CD4-positive, alpha-beta T cell (primary cell): ENCODE measurements at regions of chr1 and their contacts with region 1.

Region 1: DNA sequence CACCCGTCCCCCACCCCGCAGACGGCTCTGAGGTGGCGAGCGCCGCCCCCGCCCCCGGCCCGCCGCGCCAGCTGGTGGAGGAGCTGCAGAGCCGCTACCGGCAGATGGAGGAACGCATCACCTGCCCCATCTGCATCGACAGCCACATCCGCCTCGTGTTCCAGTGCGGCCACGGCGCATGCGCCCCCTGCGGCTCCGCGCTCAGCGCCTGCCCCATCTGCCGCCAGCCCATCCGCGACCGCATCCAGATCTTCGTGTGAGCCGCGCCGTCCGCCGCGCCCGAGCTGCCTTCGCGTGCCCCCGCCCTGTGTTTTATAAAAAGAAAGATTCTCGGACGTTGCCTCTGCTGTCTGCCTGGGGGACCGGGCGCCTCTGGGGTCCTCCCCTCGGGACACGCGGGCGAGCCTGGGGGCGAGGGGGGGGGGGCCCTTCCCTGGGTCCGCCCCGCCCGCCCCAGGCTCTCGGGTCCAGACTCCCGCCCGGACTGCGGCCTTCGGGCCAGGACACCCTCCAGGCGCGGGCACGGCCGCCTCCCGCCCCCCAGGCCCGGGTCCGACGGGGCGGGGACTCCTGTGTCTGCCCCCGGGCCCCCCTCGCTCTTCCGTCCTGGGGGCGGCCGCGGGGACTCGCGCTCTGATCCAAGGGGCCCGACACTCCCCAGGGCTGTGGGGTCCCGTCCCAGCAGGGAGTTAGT is 1.6 kb upstream of the MMP23B start:
- DNase-seq: peak; percentile 87 to 99 (median 94)
- ATAC-seq: peak; percentile 71
- H3K4me3 ChIP-seq: peak overlapping the region; percentile 20
- H3K4me3 Mint-ChIP-seq: peak overlapping the region; percentile 96
- H3K27ac ChIP-seq: peak overlapping the region in 1 of 2 donors; percentile 46
- H3K27ac Mint-ChIP-seq: peak overlapping the region; percentile 96
- H3K4me1 ChIP-seq: peaks cover 36% of the 10 kb centered on the region
- H3K4me1 Mint-ChIP-seq: peaks cover 9% of the 10 kb centered on the region
- H3K27me3 ChIP-seq: peaks cover 0 to 2% of the 10 kb centered on the region in 2 experiments
- H3K27me3 Mint-ChIP-seq: peaks cover 5% of the 10 kb centered on the region
- CTCF ChIP-seq: no peak

Region 2: DNA sequence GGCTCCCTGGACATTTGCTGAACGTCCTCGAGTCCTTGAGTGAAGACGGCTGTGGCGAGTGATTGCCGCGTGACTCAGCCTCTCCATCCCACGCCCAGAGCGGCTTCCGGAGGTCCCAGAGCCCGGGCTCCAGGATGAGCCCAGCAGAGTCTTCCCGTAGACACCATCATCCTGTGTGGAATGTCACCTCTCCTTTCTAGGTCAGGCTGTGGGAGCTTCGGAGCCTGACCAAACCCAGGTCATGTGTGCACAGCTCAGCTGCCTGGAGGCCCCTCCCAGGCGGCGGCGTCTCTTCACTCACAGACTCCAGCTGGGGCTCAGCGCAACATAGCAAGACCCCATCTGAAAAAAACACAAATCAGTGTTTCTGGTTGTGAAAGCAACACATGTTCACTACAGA is 458.0 kb after region 1 on chr1:
- CTCF ChIA-PET with region 1: no interaction called
- POLR2A ChIA-PET with region 1: no interaction called
- intact Hi-C with region 1: no loop called
- DNase-seq: no peak
- ATAC-seq: no peak
- H3K4me3 ChIP-seq: no peak overlapping the region
- H3K4me3 Mint-ChIP-seq: no peak overlapping the region
- H3K27ac ChIP-seq: no peak overlapping the region
- H3K27ac Mint-ChIP-seq: no peak overlapping the region
- H3K4me1 ChIP-seq: no peaks in the 10 kb centered on the region
- H3K4me1 Mint-ChIP-seq: no peaks in the 10 kb centered on the region
- H3K27me3 ChIP-seq: no peaks in the 10 kb centered on the region
- H3K27me3 Mint-ChIP-seq: no peaks in the 10 kb centered on the region
- CTCF ChIP-seq: no peak

Region 3: GRCh38 chr1:2391041-2391930 is 760.9 kb after region 1 on chr1 and contains the starts of genes MORN1 and RER1:
- CTCF ChIA-PET with region 1: no interaction called
- POLR2A ChIA-PET with region 1: no interaction called
- intact Hi-C with region 1: loop called in 1 of 2 experiments (anchors 10 kb)
- DNase-seq: peak; percentile 97 to 100 (median 99)
- ATAC-seq: peak; percentile 95
- H3K4me3 ChIP-seq: peak within 1 kb of the TSS; percentile 64
- H3K4me3 Mint-ChIP-seq: peak within 1 kb of the TSS; percentile 95
- H3K27ac ChIP-seq: peak within 1 kb of the TSS; percentile 60 to 63
- H3K27ac Mint-ChIP-seq: peak within 1 kb of the TSS; percentile 88
- H3K4me1 ChIP-seq: peaks cover 45% of the 10 kb centered on the region
- H3K4me1 Mint-ChIP-seq: peaks cover 31% of the 10 kb centered on the region
- H3K27me3 ChIP-seq: no peaks in the 10 kb centered on the region
- H3K27me3 Mint-ChIP-seq: no peaks in the 10 kb centered on the region
- CTCF ChIP-seq: no peak
- total RNA-seq, gene MORN1: 5.3 to 6.5 TPM
- total RNA-seq, gene RER1: 57.9 to 60.7 TPM